Natural killer cell (primary cell): ENCODE measurements at regions of chr16 and their contacts with region 1.

Region 1: GRCh38 chr16:49407873-49408550 is 34.4 kb downstream of the C16orf78 start:
- DNase-seq: peak; percentile 38 to 76
- ATAC-seq: peak in 1 of 3 donors; percentile 83
- H3K4me3 ChIP-seq: no peak overlapping the region
- H3K4me3 Mint-ChIP-seq: no peak overlapping the region
- H3K27ac ChIP-seq: no peak overlapping the region
- H3K27ac Mint-ChIP-seq: no peak overlapping the region
- H3K4me1 ChIP-seq: peaks cover 4% of the 10 kb centered on the region
- H3K4me1 Mint-ChIP-seq: no peaks in the 10 kb centered on the region
- H3K27me3 ChIP-seq: no peaks in the 10 kb centered on the region
- H3K27me3 Mint-ChIP-seq: peaks cover 0 to 9% of the 10 kb centered on the region in 2 donors
- CTCF ChIP-seq: peak; percentile 61

Region 2: GRCh38 chr16:49592546-49593423 is 184.8 kb after region 1 on chr16:
- intact Hi-C with region 1: loop called (anchors 1 kb)
- DNase-seq: peak in 1 of 2 donors; percentile 76
- ATAC-seq: peak; percentile 47 to 67 (median 49)
- H3K4me3 ChIP-seq: no peak overlapping the region
- H3K4me3 Mint-ChIP-seq: no peak overlapping the region
- H3K27ac ChIP-seq: no peak overlapping the region
- H3K27ac Mint-ChIP-seq: no peak overlapping the region
- H3K4me1 ChIP-seq: no peaks in the 10 kb centered on the region
- H3K4me1 Mint-ChIP-seq: no peaks in the 10 kb centered on the region
- H3K27me3 ChIP-seq: no peaks in the 10 kb centered on the region
- H3K27me3 Mint-ChIP-seq: peaks cover 0 to 14% of the 10 kb centered on the region in 2 donors
- CTCF ChIP-seq: peak; percentile 42

Region 3: DNA sequence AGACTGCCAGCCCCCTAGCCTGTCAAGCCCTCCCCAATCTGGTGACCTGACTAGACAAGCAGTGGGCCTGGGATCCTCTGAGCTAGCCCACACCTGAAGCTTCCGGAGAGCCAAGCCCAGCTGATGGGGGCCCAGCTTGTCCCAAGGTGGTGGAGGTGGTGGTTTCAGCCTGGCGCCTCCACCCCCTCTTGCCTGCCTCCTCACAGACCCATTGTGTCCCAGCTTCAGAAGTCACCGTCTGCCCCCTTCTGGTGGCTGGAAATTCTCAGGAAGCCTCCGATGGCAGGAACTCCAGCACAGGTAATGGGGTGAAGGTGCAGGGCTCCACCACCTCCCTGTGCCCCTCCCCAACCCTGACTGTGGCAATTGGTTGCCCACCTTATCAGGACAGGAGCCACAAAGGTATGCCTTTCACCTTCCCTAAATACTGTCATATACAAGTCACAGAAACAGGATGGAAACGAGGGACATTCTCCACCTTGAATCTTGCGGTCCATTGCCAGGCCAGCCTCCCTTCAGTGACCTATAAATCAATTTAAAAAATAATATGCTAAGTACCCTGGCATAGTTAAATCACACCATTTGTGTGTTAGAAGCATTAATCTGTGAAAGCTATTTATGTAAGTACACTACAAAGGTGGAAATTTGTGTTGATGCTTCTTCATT is 513.9 kb after region 1 on chr16:
- intact Hi-C with region 1: loop called (anchors 1 kb)
- DNase-seq: peak in 1 of 2 donors; percentile 61
- ATAC-seq: peak in 1 of 3 donors; percentile 45
- H3K4me3 ChIP-seq: no peak overlapping the region
- H3K4me3 Mint-ChIP-seq: no peak overlapping the region
- H3K27ac ChIP-seq: no peak overlapping the region
- H3K27ac Mint-ChIP-seq: no peak overlapping the region
- H3K4me1 ChIP-seq: no peaks in the 10 kb centered on the region
- H3K4me1 Mint-ChIP-seq: no peaks in the 10 kb centered on the region
- H3K27me3 ChIP-seq: no peaks in the 10 kb centered on the region
- H3K27me3 Mint-ChIP-seq: peaks cover 6 to 14% of the 10 kb centered on the region in 2 donors
- CTCF ChIP-seq: peak; percentile 29